SK-N-SH (cell line): ENCODE measurements at regions of chr12 and their contacts with region 1.

Region 1: DNA sequence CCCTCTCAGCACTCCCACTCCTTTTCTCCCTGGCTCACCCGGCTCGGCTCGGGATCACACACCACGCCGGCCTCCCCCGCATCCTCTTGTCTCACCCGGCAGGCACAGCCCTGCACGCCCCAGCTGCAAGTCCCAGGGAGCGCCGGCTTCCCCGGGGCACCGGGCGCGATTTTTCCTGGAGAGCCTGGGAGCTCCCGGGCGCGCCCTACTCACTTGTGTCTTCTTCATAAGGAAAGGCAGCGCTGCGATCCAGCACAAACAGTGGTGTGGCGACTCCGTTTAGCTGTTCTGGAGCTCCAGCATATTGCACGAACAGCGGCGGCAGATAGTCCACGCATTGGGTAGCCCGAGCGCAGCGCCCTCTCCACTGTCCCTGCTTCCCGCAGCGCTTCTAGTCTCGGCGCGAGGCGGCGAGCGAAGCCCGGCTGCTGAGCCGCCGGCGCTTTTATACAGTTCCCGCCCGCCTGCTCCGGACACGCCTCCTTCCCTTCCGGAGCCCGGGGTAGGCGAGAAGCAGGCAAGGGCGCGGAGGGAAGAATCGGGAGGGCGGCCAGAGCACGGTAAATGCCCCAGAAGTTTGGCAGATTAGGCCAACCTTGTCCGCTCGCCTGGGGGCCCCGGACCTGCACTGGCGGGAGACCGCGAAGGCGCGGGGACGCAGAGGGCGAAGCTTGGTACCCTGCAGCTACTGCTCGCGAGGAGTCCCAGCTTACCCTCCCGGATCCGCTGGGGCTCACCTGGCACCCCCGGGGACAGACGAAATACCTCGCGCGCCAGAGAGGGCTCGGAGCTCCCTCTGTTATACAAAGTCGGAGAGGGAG is at the start of gene KITLG:
- DNase-seq: peak; percentile 83
- H3K4me3 ChIP-seq: peak within 1 kb of the TSS; percentile 66 to 98
- H3K27ac ChIP-seq: peak within 1 kb of the TSS in 1 of 2 experiments; percentile 75; a peak in 2 of 4 replicates
- H3K4me1 ChIP-seq: peaks cover 0 to 10% of the 10 kb centered on the region in 2 experiments; a peak in 2 of 4 replicates
- H3K27me3 ChIP-seq: no peaks in the 10 kb centered on the region
- CTCF ChIP-seq: peak; percentile 42
- EP300 ChIP-seq: no peak
- RAD21 ChIP-seq: peak; percentile 59
- polyA plus RNA-seq, gene KITLG: 8.9 and 13.3 TPM in 2 replicates

Region 2: GRCh38 chr12:88566171-88566829 is 14.0 kb before region 1 on chr12:
- CTCF ChIA-PET with region 1: interaction called, 18 read pairs
- POLR2A ChIA-PET with region 1: no interaction called
- DNase-seq: no peak
- H3K4me3 ChIP-seq: no peak overlapping the region
- H3K27ac ChIP-seq: peak overlapping the region in 1 of 2 experiments; percentile 17; a peak in 1 of 4 replicates
- H3K4me1 ChIP-seq: peaks cover 0 to 36% of the 10 kb centered on the region in 2 experiments
- H3K27me3 ChIP-seq: no peaks in the 10 kb centered on the region
- CTCF ChIP-seq: no peak
- EP300 ChIP-seq: no peak
- RAD21 ChIP-seq: no peak

Region 3: GRCh38 chr12:88723219-88723618 is 143.0 kb after region 1 on chr12:
- CTCF ChIA-PET with region 1: no interaction called
- POLR2A ChIA-PET with region 1: no interaction called
- DNase-seq: no peak
- H3K4me3 ChIP-seq: no peak overlapping the region
- H3K27ac ChIP-seq: no peak overlapping the region
- H3K4me1 ChIP-seq: no peaks in the 10 kb centered on the region; a peak in 1 of 4 replicates
- H3K27me3 ChIP-seq: no peaks in the 10 kb centered on the region
- CTCF ChIP-seq: no peak
- EP300 ChIP-seq: no peak
- RAD21 ChIP-seq: no peak

Region 4: GRCh38 chr12:88816211-88816613 is 236.0 kb after region 1 on chr12:
- CTCF ChIA-PET with region 1: no interaction called
- POLR2A ChIA-PET with region 1: no interaction called
- DNase-seq: no peak
- H3K4me3 ChIP-seq: no peak overlapping the region
- H3K27ac ChIP-seq: no peak overlapping the region
- H3K4me1 ChIP-seq: no peaks in the 10 kb centered on the region
- H3K27me3 ChIP-seq: no peaks in the 10 kb centered on the region
- CTCF ChIP-seq: no peak
- EP300 ChIP-seq: no peak
- RAD21 ChIP-seq: no peak